Pancreas (tissue), 10 donors: ENCODE measurements at regions of chr9 and their contacts with region 1.

Region 1: DNA sequence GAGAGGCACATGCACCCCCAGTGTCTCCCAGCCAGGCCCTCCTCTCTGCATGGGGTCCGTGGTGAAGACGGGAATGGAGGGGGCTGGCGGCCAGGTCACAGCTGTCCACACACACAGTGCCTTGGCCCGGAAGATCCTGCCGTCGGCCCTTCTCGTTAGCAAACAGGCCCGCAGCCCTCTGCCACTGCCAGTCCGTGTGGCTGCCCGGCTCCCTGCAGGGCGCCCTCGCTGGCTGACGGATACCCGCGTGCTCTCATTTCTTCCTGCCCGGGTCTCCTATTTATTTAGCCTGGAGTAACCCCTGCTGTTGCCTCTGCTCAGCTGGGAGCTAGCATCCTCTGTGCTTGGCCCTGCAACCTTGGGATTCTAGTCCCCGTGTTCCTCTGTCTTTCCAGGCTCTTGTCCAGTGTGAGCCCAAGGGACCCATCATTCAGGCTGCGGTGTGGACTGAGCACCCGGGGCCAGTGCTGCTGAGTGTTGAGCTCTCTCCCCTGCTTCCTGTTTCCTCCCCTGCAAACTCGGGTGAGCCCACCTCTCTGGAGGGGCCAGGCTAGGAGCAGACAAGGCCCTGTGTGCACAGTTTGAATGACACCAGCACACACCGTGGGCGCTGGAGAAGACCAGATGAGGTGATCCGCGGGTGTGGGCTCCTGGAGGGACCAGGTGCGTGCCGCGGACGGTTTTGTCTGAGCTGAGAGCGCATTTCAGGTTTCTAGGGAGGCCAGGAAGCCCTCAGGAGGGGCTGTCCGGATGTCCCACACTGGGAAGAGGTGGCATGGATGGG is 14.6 kb upstream of the RNU6ATAC start:
- DNase-seq: peak in 5 of 6 donors; percentile 15 to 67 (median 22)
- ATAC-seq: peak in 3 of 4 donors; percentile 26 to 50 (median 40)
- H3K4me3 ChIP-seq: no peak overlapping the region
- H3K27ac ChIP-seq: no peak overlapping the region
- H3K4me1 ChIP-seq: no peaks in the 10 kb centered on the region
- H3K27me3 ChIP-seq: peaks cover 0 to 5% (median 0%) of the 10 kb centered on the region in 4 donors
- CTCF ChIP-seq: no peak

Region 2: GRCh38 chr9:133855802-133856521 is 323.0 kb before region 1 on chr9:
- intact Hi-C with region 1: no loop called
- DNase-seq: peak in 3 of 6 donors; percentile 42 to 53 (median 52)
- ATAC-seq: peak; percentile 30 to 71 (median 51)
- H3K4me3 ChIP-seq: no peak overlapping the region
- H3K27ac ChIP-seq: peak overlapping the region in 3 of 4 donors; percentile 20 to 55 (median 54)
- H3K4me1 ChIP-seq: peaks cover 0 to 11% (median 3%) of the 10 kb centered on the region in 3 donors
- H3K27me3 ChIP-seq: no peaks in the 10 kb centered on the region
- CTCF ChIP-seq: no peak

Region 3: DNA sequence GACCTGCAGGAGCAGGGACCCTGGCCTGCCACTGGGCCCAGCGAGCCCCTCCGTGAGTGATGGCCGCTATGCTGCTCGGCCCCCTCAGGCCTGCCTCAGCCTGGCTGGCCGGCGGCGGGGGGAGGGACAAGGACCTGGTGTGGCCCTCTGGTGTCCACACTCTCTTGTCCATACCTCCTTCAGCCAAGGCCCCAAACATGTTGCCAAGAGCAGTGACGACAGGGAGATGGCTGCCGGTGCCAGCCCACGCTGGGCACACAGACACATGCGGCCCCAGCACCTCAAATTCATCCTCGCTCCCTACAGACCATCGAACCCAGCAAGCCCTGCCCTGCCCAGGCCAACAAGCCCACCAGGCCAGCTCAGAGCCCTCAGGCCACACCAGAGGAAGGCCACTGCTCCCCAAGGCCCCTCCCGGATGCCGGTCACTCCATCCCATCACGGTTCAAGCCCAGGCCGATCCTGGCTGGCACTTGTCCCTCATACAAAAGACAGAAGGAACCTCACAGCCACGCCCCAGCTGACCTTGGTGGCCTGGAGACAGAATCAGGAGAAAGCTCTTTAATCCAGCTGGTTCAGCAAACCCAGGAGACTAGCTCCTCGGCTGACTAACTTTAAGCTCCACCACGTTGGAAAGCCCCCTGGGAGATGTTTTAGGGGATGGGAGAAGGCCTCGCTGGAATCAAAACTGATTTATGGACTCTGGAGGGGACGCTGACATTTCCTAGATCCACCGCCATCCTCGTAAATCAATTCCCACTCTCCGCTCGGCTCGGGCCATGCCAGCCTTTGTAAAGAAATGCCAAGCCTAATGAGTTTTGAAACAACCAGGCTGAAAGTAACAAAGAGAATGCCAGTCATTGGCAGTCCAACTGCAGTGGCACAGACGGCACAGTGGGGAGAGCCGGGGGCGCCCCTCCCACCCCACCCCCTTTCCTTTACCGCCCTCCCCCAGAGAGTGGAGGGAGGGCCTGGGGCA is 271.7 kb before region 1 on chr9:
- intact Hi-C with region 1: no loop called
- DNase-seq: no peak
- ATAC-seq: peak in 1 of 4 donors; percentile 38
- H3K4me3 ChIP-seq: no peak overlapping the region
- H3K27ac ChIP-seq: no peak overlapping the region
- H3K4me1 ChIP-seq: no peaks in the 10 kb centered on the region
- H3K27me3 ChIP-seq: no peaks in the 10 kb centered on the region
- CTCF ChIP-seq: no peak

Region 4: DNA sequence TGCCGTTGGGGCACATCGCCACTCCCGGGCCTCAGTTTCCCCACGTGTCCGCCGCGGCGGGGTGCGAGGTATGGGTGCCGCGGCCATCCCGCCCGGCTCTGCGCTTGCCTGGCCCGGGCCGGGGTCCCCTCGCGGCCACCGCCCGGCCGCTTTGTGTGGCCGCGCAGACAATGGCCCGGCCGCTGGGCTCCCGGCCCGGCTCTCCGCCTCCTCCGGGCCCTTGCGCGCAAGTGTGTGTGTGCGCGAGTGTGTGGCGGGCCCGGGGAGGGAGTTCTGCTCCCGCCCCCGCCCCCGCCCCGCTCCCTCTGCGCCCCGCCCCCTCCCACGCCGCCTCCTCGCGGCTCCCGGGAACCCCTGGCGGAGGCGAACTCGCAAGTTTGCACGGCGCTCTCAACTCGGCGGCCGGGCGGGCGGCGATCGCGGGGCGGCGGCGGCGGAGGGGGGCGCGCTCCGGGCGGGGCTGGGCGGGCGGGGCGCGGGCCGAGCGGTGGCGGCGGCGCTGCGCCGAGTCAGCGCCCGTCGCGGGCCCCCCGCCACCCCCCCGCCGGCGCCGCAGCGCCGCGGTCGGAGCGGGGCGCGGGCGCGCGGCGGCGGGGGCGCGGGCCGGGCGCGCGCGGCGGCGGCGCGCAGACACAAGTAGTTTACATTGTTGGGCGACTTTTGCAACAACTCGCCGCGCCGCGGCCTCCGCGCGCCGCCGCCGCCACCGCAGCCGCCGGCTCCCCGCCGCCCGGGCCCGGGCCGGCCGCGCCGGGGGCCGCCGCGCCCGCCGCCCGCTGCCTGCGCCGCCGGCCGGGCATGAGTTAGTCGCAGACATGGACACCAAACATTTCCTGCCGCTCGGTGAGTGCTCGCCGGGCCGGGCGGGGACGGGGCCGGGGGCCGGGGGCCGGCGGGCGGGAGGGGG is 147.1 kb after region 1 on chr9 and contains the start of gene RXRA:
- intact Hi-C with region 1: loop called in 1 of 3 experiments (anchors 10 kb)
- DNase-seq: peak; percentile 81 to 92 (median 88)
- ATAC-seq: peak; percentile 63 to 79 (median 69)
- H3K4me3 ChIP-seq: peak within 1 kb of the TSS; percentile 61 to 86 (median 68)
- H3K27ac ChIP-seq: peak within 1 kb of the TSS; percentile 84 to 91 (median 88)
- H3K4me1 ChIP-seq: peaks cover 10 to 30% (median 30%) of the 10 kb centered on the region in 3 donors
- H3K27me3 ChIP-seq: no peaks in the 10 kb centered on the region
- CTCF ChIP-seq: no peak
- total RNA-seq, gene RXRA: 20.2 to 34.1 (median 22.9) TPM